SK-MEL-5 (cell line): ENCODE measurements at regions of chr1 and their contacts with region 1.

Region 1: GRCh38 chr1:39738622-39739366 is at the start of gene PPIE:
- DNase-seq: peak; percentile 91
- total RNA-seq, gene PPIE: 33.3 and 39.1 TPM in 2 replicates

Region 2: GRCh38 chr1:39545531-39545930 is 193.3 kb before region 1 on chr1:
- in situ Hi-C with region 1: no loop called
- DNase-seq: no peak

Region 3: DNA sequence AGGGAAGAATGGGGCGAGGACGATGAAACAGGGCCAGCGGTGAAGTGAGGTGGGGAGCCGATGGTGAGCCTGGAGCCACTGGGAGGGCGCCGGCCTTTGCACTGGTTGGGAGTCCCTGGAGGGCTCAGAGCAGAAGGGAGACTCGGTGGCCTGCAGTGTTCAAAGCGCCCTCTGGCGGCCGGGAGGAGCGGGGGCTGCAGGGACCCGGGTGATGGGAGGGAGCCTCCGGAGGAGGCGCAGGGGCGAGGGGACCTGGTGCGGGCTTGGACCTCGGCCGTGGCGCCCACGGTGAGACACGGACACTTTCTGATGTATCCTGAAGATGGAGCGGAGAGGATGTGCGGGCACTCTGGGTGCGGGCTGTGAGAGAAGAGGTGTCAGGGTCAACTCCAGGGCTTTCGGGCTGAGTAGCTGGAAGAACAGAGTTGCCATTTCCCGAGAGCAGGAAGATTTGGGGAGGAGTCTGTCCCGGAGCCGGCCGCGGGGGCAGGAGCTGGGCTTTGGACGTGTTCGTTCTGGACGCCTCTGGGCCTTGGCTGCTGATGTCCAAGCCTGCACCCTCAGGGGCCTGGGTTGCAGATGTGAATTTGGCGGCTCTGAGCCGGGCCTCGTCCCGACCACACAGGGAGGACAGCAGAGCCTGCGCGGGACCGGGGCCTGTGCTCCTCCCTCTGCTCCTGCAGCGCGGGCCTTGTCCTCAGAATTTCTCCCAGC is 129.0 kb before region 1 on chr1:
- in situ Hi-C with region 1: loop called (anchors 25 kb)
- DNase-seq: peak; percentile 68

Region 4: DNA sequence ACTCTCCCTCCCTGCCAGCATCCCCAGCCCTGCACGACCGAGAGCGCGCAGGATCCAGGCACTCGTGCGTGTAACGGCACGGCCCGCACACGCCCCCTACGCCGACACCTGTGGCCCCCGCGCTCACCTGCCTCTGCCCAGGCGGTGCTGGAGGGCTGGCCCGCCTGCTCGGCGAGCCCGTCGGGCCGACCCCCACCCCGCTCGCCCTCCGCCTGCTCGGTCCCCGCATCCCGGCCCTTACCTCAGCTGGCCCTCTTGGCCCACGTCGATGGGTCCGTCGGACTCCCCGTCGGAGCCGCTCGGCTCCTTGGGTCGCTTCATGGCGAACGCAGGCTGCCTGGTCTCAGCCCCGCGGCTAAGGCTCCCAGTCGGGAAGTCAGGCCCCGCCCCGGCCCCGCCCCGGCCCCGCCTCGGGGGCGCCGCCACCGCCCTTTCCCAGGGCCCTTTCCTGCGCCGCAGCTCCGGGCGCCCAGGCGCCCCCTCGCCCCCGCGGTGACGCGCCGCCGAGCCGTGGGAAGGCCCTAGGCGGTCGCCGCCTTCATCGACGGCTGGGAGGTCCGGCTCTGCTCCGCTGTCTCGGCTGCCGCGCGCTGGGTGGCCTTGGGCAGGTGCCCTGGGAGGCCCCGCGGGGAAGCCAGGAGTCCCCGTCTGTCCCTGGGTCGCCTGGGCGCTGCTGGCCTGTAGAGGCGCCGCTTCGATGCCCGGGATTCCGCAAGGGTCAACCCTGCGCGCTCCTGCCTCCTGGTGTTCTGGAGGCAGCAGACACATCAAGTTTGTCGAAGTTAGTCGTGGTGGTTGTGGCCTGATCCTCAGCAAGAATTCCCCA is 99.3 kb before region 1 on chr1 and contains the start of gene HEYL:
- in situ Hi-C with region 1: no loop called
- DNase-seq: no peak
- total RNA-seq, gene HEYL: not detected in 2 replicates

Region 5: DNA sequence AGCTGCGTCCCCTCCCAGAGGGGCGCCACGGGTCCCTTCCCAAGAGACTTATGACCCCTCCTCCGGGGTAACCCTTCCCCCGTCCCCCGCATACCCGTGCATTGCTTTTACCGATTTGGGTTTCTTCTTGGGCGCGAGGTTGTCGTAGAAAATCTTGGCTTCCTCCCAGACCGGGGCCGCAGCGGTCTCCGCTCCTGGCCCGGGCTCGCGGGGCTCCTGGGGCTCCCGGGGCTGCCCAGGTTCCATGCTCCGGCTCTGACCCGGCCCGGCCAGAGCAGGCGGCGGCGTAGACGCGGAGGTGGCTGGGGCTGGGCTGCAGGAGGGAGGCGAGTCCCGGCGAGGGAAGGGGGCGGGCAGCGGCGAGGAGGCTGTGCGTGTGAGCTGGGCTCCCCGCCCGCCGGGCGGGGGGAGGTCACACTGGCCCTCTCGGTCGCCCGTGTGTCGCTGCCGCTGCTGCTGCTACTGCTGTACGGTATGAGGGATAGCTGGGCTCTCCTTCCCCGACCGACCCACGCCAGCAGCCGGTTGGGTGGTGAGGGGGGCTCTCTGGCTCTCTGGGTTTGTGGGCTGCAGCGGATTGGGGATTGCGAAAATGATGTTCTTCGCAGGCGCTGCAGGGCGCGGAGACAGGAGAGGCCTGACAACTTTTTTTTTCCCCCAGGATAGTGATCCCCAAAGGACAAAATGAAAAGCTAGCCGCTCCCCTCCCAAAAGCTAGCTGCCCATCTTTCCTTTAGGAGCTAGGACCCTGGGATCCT is 66.8 kb before region 1 on chr1 and contains the start of gene NT5C1A:
- in situ Hi-C with region 1: no loop called
- DNase-seq: no peak
- total RNA-seq, gene NT5C1A: 0.13 TPM in 2 replicates